ENCODE measurements at regions of chr6 and their contacts with region 1.

Region 1: DNA sequence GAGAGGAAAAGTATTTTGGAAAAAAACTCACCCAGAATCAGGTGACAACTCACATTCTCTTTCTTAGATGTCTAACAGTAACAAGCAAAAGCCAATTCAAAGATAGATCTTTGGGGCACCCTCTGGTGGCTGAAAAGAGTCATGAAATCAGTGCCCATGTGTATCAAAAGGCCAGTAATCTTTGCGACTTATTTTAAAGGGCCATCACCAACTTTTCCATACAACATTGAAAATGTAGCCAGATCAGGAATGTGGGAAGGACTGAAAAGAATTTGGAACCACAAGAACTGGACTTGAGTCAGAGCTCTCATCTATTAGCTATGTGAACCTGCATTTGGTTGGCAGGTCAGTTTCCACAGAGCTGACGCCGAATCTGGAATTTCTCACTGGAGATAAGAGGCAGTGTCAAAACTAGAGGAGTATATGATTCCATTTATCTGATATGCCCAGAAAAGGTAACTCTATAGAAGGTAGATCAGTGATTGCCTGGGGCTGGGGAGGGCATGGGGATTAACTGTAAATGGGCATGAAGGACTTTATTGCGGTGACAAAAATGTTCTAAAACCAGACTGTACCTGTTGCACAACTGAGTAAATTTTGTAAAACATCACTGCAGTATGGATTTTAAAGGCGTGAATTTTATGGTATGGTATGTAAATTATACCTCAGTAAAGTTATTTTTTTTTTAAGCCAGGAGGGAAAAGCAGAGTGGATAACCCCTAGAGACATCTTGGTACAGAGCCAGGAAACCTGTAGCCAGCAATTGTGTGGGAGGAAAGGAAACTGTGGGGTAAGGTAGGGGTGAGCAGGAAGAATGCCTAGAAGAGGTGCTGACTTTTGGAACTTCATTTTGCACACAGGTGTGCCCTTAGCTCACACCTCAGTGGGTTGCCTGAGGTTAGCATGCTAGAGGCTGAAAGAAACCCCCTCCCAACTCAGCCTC is 117.1 kb upstream of the ASF1A start:
- DNase-seq: peak; percentile 70
- CTCF ChIP-seq: peak; percentile 70

Region 2: GRCh38 chr6:117976030-117976651 is 800.7 kb before region 1 on chr6:
- in situ Hi-C with region 1: loop called (anchors 25 kb)
- DNase-seq: peak; percentile 51
- CTCF ChIP-seq: peak; percentile 64

Region 3: GRCh38 chr6:118283766-118284165 is 493.1 kb before region 1 on chr6:
- in situ Hi-C with region 1: loop called (anchors 25 kb)
- DNase-seq: peak; percentile 18
- CTCF ChIP-seq: peak; percentile 64

Region 4: DNA sequence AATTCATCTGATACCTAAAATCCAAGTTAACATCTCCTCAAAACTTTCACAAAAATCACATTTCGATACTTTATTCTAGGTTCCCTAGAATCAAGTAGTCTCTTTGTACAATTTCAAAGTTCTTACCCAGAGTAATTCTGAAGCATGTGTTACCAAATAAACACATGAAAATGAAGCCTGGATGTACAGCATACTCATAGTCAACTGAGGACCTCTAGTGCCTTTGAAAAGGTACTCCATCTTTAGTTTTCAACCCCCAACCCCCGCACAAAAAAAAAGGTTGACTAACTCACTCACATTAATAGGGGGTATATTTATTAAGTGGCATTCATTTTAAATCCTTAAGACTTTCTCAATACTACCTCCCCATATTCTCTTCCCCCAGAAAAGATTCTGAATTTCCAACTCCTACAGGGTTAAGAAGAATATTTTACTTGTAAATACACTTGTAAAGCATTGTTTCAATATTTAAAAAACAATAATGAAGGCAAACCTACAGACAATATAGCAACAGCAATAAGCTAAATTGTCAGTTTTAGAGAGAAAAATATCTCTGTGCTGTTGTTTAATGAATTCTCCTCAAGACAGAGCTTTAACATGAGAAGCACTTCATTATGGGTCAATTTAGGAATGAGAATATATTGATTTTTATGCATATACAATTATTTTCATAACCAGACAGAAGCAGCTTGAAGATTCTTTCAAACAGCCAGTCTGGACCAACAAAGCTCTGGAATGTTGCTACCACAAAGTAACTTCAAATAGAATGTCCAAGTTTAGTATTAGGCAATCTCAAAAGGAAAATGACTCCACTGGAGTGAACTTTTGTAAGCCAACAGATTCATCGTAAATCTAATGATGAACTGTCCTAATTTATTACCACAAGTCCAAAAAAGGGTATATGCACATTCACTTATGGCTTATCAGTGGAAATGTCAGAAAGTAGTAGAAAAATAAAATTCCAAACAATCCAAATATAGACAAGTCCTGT is 225.5 kb before region 1 on chr6:
- in situ Hi-C with region 1: loop called (anchors 25 kb)
- DNase-seq: peak; percentile 38
- CTCF ChIP-seq: peak; percentile 59

Measured in GM13977 (cell line).